Colonic mucosa (tissue), 4 donors: ENCODE measurements at regions of chr6 and their contacts with region 1.

Region 1: DNA sequence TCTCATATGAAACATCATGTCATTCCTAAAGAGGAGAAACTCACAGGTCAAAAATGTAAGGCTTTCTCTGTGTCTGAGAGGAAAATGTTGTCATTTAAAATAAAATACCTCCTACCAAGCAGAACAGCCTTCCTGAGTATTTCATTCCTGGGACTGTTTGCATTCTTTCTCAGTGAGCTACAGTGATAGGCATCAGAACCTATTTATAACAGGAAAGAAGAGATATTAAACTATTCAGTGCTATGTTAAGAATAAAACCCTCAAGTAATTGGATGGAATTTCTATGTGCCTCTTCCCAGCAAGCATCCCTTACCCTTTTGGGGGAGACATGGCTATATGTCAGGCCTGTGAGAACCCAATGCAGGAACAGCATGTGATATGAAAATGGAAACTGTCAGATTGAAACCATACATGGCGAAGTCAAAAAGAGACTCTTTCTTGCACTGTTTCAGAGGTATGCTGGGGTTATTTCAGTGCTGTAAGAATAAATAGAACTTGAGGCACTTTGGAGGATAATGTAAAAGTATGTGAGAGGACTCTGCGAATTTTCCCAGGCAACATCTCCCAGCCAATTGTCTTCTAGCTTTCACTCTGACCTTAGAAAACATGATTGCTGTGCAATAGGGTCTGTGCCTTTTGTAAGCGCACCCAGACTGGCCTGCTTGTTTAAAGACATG is 133.8 kb upstream of the CCN2 start:
- DNase-seq: no peak
- H3K4me3 ChIP-seq: no peak overlapping the region
- H3K27ac ChIP-seq: peak overlapping the region; percentile 27
- H3K4me1 ChIP-seq: no peaks in the 10 kb centered on the region
- H3K27me3 ChIP-seq: no peaks in the 10 kb centered on the region
- CTCF ChIP-seq: no peak

Region 2: GRCh38 chr6:131765081-131765803 is 319.7 kb before region 1 on chr6:
- intact Hi-C with region 1: loop called (anchors 10 kb)
- DNase-seq: no peak
- H3K4me3 ChIP-seq: no peak overlapping the region
- H3K27ac ChIP-seq: no peak overlapping the region
- H3K4me1 ChIP-seq: no peaks in the 10 kb centered on the region
- H3K27me3 ChIP-seq: no peaks in the 10 kb centered on the region
- CTCF ChIP-seq: no peak

Region 3: DNA sequence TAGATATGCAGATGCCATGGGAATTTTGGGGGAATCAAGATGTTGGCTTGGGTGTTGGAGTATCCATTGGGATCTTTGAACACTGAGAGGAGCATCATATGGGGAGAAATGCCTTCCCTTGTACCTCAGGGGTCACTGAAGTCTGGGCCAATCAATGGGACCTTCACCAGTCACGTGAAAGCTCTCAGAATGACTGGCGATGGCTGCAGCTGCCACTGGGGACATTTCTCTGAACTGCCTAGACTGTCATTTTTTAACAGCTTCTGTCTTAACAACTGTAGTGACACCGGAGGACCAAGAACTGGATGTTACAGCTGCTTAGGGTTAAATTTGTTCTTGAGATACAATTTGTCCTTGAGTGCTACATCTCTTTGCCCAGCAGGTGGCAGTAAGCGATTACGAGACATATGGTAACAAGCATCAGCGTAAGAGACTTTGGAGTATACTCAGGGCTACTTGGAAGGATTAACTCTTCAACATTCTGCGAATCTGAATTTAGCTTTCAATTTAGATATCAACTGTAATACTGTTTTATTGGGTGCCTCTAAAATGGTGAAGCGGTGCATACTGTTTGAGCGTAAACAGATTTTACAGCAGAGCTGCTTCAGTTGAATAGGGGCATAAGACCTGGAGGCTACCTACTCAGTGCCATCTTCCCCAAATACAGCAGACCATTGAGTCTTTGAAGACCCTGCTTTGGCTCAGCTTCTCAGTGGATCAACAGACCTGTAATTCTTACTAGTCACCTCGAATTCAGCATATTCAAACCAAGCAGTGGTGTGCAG is 169.8 kb before region 1 on chr6:
- intact Hi-C with region 1: no loop called
- DNase-seq: peak; percentile 78
- H3K4me3 ChIP-seq: no peak overlapping the region
- H3K27ac ChIP-seq: no peak overlapping the region
- H3K4me1 ChIP-seq: no peaks in the 10 kb centered on the region
- H3K27me3 ChIP-seq: no peaks in the 10 kb centered on the region
- CTCF ChIP-seq: peak; percentile 78